ENCODE measurements at regions of chr1 and their contacts with region 1.

Region 1: DNA sequence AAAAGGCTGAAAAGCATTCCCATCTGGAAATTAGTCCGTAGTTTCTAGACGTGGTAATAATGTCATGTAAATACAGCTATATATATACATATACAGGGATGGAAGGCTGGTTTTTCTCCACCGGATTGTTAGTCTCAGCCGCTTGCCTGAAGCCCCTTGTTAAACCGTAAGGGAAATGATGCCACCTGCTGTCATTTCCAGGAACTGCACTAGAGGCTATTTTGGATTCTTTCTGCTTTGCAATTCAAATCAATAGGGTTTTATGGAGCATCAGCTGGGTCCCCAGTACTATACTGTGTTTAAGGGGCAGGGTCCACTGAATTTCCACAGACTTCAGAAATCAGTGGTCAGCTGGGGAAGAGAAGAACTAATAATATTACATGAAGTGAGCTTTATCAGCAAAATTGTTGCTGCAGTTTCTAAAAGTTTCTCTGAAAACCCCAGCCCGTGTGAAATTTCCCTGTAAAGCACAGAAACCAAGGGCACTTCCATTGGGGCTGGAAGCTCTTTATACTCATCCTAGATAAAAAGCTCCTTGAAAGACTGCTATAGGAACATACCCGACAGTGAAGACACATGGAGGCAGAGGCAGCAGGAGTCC is 33.8 kb upstream of the MPZL1 start:
- DNase-seq: peak; percentile 86
- H3K4me3 ChIP-seq: no peak overlapping the region
- H3K27ac ChIP-seq: no peak overlapping the region
- H3K4me1 ChIP-seq: peaks cover 4% of the 10 kb centered on the region
- H3K27me3 ChIP-seq: peaks cover 5 to 6% of the 10 kb centered on the region in 2 experiments
- CTCF ChIP-seq: peak; percentile 77 to 84
- POLR2A ChIP-seq: no peak

Region 2: DNA sequence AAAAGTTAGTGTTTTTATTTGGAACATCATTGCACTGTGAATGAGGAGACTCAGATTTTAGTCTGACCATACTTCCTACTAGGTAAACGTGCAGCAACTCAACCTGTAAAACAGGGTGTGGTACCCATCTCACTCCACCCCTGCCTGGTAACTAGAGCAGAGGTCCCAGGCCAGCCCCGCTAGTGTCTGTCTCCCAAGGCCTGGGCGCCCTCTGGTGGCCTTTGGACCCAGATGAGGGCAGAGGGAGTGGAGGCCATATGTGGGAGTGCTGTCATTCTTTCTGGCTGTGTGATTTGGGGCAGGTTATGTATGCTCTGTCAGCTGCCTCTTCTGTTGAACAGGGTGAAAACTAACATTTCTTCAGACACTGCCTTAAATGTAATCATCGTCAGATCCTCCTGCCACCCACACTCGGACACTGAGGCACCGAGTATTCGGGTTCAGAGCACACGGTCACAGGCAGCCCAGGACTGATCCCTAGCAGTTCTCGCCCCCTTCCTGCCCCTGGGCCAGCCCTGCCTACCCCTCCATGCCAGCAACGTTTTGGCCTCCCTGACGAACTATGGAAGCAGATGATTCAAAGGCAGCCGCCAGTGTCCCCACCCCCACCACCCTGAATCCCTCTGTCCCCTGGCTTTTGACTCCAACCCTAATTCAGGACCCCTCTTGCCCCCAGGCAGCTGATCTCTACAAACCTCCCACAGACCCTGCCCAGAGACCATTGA is 245.7 kb before region 1 on chr1:
- CTCF ChIA-PET with region 1: no interaction called
- POLR2A ChIA-PET with region 1: no interaction called
- dilution Hi-C with region 1: no loop called
- intact Hi-C with region 1: loop called (anchors 10 kb)
- DNase-seq: peak; percentile 49
- H3K4me3 ChIP-seq: no peak overlapping the region
- H3K27ac ChIP-seq: no peak overlapping the region
- H3K4me1 ChIP-seq: no peaks in the 10 kb centered on the region
- H3K27me3 ChIP-seq: peaks cover 0 to 4% of the 10 kb centered on the region in 2 experiments
- CTCF ChIP-seq: peak; percentile 81 to 88
- POLR2A ChIP-seq: no peak

Region 3: GRCh38 chr1:167553136-167554027 is 134.6 kb before region 1 on chr1 and contains the start of gene CREG1:
- CTCF ChIA-PET with region 1: interaction called, 15 read pairs
- POLR2A ChIA-PET with region 1: no interaction called
- dilution Hi-C with region 1: no loop called
- intact Hi-C with region 1: loop called (anchors 1 kb)
- DNase-seq: peak; percentile 91
- H3K4me3 ChIP-seq: peak within 1 kb of the TSS; percentile 42 to 60 (median 49)
- H3K27ac ChIP-seq: no peak within 1 kb of the TSS
- H3K4me1 ChIP-seq: peaks cover 5% of the 10 kb centered on the region
- H3K27me3 ChIP-seq: peaks cover 0 to 2% of the 10 kb centered on the region in 2 experiments
- CTCF ChIP-seq: no peak
- POLR2A ChIP-seq: peak; percentile 49
- total RNA-seq, gene CREG1: 12.1 and 15.8 TPM in 2 replicates

Region 4: DNA sequence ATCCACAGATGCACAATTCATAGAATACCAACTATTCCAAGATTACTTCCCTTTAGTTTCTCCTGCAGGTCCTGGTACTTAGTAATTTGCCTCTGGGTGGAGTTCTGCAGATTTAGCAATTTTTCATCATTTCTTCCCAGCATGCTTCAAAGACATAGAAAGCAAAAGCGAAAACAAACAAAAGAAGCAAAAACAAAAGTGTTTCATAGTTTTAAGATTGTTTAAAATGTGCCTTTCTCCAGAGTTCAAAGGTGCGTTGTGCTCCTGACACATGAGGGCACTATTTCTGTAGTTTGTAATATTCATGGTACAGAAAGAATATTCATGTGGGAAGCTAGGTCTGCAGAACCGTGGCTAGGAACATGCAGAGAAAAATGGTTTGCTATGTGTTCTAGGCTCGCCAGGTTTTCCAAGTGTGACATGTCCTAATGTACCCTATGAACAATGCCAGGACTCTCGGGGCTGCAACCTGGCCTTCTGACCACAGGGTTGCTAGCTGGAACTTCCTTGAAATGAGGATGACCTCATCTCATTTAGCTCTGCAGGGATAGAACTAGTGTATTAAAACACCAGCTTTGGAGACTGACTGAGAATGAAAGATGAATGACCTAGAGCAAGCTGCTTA is 88.0 kb before region 1 on chr1:
- CTCF ChIA-PET with region 1: interaction called, 78 read pairs
- POLR2A ChIA-PET with region 1: no interaction called
- dilution Hi-C with region 1: no loop called
- intact Hi-C with region 1: loop called (anchors 1 kb)
- DNase-seq: peak; percentile 40
- H3K4me3 ChIP-seq: no peak overlapping the region
- H3K27ac ChIP-seq: no peak overlapping the region
- H3K4me1 ChIP-seq: no peaks in the 10 kb centered on the region
- H3K27me3 ChIP-seq: no peaks in the 10 kb centered on the region
- CTCF ChIP-seq: peak in 1 of 2 donors; percentile 29
- POLR2A ChIP-seq: no peak

Region 5: DNA sequence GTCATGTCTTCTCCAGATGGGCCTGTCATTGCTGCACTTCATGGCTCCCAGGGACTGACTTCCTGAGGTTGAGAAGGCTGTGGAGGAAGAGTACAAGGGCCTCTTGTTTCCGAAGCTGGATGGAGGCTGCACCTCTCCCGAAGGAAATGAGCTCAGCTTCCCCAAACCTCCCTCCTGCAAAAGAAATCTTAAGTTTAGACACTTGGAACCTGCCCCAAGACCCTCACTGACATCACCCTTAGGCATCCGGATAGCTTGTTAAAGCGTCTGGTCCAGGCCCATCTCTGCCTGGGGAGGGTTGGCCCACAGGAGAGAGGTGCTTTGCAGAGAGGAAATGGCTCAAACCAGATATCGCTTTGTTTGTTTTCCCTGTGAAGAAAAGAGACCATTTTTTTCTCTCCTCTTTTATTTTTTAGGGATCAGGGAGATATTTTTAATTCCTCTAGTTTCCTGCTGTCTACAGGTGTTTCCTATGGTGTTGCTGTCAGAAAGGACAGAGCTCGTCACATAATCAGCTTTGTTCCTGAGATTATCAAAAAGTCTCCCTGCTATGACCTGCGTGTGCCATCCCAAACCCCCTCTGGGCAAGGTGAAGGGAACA is 32.9 kb before region 1 on chr1:
- CTCF ChIA-PET with region 1: interaction called, 10 read pairs
- POLR2A ChIA-PET with region 1: no interaction called
- dilution Hi-C with region 1: no loop called
- intact Hi-C with region 1: loop called (anchors 2 kb)
- DNase-seq: peak; percentile 89
- H3K4me3 ChIP-seq: no peak overlapping the region
- H3K27ac ChIP-seq: peak overlapping the region; percentile 61
- H3K4me1 ChIP-seq: peaks cover 16% of the 10 kb centered on the region
- H3K27me3 ChIP-seq: peaks cover 3 to 5% of the 10 kb centered on the region in 2 experiments
- CTCF ChIP-seq: no peak
- POLR2A ChIP-seq: no peak

Region 6: DNA sequence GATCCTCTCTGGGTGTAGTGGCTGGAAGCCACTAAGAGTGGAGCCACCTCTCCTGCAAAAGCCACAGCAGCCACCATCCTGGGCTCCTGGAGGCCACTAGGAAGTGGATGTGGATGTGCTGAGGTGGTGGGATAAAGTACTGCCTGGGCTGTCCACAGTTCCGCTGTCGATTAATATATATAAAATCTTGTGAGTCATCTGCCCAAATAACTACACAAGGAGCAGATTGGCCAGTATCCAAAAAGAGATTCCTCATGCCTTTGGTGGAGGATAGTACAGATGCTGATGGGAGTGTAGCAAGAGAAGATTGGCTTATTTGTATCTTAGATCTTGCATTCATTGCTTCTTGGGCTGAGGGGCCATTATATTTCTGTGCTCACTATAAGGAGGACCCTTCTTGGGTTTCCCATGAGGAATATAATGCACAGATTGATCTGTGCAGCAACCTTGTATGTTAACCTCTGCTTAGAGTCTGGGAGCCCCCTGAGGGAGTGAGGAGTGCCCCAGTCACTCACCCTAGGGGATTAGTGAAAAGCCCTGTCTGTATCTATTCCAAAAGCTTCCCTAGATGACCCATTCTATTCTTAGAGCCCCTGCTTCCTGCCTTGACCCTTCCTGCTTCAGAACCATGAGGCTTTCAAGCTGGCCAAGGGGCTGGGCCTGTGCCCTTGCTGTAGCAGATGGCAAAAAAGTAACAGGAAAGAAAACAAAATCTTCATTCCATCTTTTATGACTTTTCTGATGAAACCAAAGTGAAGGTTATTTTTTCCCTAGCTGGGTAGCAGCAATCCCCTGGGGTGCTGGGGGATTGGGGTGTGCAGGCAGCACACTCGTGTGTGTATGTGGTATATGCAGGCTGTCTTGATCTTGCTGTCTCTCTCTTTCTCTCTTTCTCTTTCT is 26.2 kb before region 1 on chr1:
- CTCF ChIA-PET with region 1: interaction called, 10 read pairs
- POLR2A ChIA-PET with region 1: no interaction called
- dilution Hi-C with region 1: no loop called
- intact Hi-C with region 1: no loop called
- DNase-seq: peak; percentile 22
- H3K4me3 ChIP-seq: no peak overlapping the region
- H3K27ac ChIP-seq: no peak overlapping the region
- H3K4me1 ChIP-seq: peaks cover 5% of the 10 kb centered on the region
- H3K27me3 ChIP-seq: peaks cover 0 to 5% of the 10 kb centered on the region in 2 experiments
- CTCF ChIP-seq: no peak
- POLR2A ChIP-seq: no peak

Region 7: DNA sequence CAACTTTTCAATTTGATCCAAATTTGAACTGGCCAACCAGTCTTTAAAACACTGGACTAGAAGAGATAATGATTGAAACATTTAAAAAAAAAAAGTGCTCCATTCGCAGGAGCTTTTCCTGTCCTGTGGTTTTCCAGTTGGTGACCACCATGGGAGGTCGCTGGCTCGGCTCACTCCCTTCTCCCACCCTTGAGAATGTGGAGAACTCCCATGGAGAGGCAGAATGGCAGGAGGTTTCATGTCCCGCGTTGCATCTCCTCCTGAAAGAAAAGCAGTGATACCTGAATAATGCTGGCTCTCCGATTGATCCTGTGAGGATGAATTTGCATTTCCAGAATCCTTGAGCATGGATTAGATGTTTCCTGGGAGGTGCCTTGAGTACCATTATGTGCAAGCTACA is 17.2 kb after region 1 on chr1:
- CTCF ChIA-PET with region 1: interaction called, 11 read pairs
- POLR2A ChIA-PET with region 1: no interaction called
- dilution Hi-C with region 1: no loop called
- intact Hi-C with region 1: no loop called
- DNase-seq: no peak
- H3K4me3 ChIP-seq: no peak overlapping the region
- H3K27ac ChIP-seq: no peak overlapping the region
- H3K4me1 ChIP-seq: peaks cover 2% of the 10 kb centered on the region
- H3K27me3 ChIP-seq: peaks cover 29 to 38% of the 10 kb centered on the region in 2 experiments
- CTCF ChIP-seq: no peak
- POLR2A ChIP-seq: no peak

Measured in endothelial cell of umbilical vein (primary cell).